ENCODE measurements at regions of chr9 and their contacts with region 1.

Region 1: GRCh38 chr9:75185585-75186170 is 97.4 kb downstream of the OSTF1 start:
- DNase-seq: no peak
- H3K4me3 ChIP-seq: no peak overlapping the region
- H3K27me3 ChIP-seq: no peaks in the 10 kb centered on the region
- CTCF ChIP-seq: peak; percentile 70

Region 2: GRCh38 chr9:74696520-74696919 is 489.2 kb before region 1 on chr9:
- CTCF ChIA-PET with region 1: no interaction called
- POLR2A ChIA-PET with region 1: no interaction called
- DNase-seq: no peak
- H3K4me3 ChIP-seq: no peak overlapping the region
- H3K27me3 ChIP-seq: no peaks in the 10 kb centered on the region
- CTCF ChIP-seq: no peak

Region 3: DNA sequence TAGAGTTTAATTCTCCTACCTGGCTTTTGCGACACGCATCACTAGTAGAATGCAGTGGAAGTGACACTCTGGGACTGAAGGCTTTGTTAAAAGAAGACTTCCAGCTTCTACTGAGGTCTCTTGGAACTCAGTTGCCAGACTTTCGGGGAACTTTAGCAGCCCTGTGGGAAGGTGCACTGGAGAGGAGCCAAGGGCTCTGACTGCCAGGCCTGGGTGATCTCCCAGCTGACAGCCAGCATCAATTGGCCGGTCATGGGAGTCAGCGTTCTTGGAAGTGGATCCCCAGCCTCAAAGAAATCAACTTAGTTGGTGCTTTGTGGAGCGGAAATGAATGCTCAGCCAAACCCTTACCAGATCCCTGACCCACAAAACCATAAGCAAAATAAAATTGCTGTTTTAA is 10.3 kb before region 1 on chr9:
- CTCF ChIA-PET with region 1: interaction called, 16 read pairs
- POLR2A ChIA-PET with region 1: no interaction called
- DNase-seq: no peak
- H3K4me3 ChIP-seq: no peak overlapping the region
- H3K27me3 ChIP-seq: no peaks in the 10 kb centered on the region
- CTCF ChIP-seq: no peak

Region 4: GRCh38 chr9:75200892-75201470 is 15.3 kb after region 1 on chr9:
- CTCF ChIA-PET with region 1: interaction called, 13 read pairs
- POLR2A ChIA-PET with region 1: no interaction called
- DNase-seq: no peak
- H3K4me3 ChIP-seq: no peak overlapping the region
- H3K27me3 ChIP-seq: no peaks in the 10 kb centered on the region
- CTCF ChIP-seq: peak; percentile 60

Measured in BJ (cell line).